CD14-positive monocyte (primary cell): ENCODE measurements at regions of chr5 and their contacts with region 1.

Region 1: GRCh38 chr5:39447059-39447458 is 22.3 kb upstream of the DAB2 start:
- DNase-seq: no peak
- H3K4me3 ChIP-seq: no peak overlapping the region
- H3K4me3 Mint-ChIP-seq: no peak overlapping the region
- H3K27ac ChIP-seq: no peak overlapping the region
- H3K27ac Mint-ChIP-seq: no peak overlapping the region
- H3K4me1 ChIP-seq: no peaks in the 10 kb centered on the region
- H3K4me1 Mint-ChIP-seq: peaks cover under 1% of the 10 kb centered on the region
- H3K27me3 ChIP-seq: no peaks in the 10 kb centered on the region
- H3K27me3 Mint-ChIP-seq: peaks cover 0 to 2% (median 0%) of the 10 kb centered on the region in 3 donors
- CTCF ChIP-seq: no peak

Region 2: DNA sequence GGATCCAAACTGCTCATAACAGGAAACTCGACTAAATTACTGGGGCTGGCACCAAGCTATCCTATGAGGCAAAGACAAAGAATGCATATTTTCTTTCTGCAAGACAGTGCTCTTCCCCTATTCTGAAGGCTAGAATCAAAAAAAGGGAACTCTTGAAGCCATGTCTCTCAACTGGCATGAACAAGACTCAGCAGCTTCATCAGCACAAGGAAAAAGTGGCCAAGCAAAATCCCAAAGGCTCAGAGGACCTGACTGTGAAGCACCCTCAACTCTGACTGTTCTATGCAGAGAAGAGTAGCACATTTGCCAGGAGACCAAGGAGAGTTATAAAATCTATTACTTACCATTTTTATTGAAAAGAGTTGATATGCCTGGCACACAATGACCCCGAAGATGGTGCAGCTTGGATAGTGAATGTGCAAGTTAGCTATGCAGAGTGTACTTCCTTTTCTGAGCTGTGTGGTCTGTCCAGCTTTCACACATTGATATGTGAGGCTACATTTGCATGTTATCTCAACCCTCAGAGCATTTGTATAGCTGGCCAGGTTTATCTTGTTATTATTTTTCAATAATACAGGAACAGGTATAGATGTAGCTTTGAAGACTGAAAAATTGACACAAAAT is 176.7 kb before region 1 on chr5:
- intact Hi-C with region 1: no loop called
- DNase-seq: peak; percentile 58 to 79 (median 76)
- H3K4me3 ChIP-seq: peak overlapping the region; percentile 28 to 78 (median 66)
- H3K4me3 Mint-ChIP-seq: peak overlapping the region; percentile 59 to 84
- H3K27ac ChIP-seq: peak overlapping the region; percentile 3 to 88
- H3K27ac Mint-ChIP-seq: peak overlapping the region; percentile 83 to 96 (median 94)
- H3K4me1 ChIP-seq: peaks cover 86 to 99% of the 10 kb centered on the region in 2 donors
- H3K4me1 Mint-ChIP-seq: peaks cover 81% of the 10 kb centered on the region
- H3K27me3 ChIP-seq: no peaks in the 10 kb centered on the region
- H3K27me3 Mint-ChIP-seq: no peaks in the 10 kb centered on the region
- CTCF ChIP-seq: no peak

Region 3: GRCh38 chr5:39399135-39400036 is 47.7 kb before region 1 on chr5:
- intact Hi-C with region 1: no loop called
- DNase-seq: peak; percentile 90 to 100 (median 97)
- H3K4me3 ChIP-seq: peak overlapping the region in 1 of 3 experiments; percentile 54
- H3K4me3 Mint-ChIP-seq: peak overlapping the region in 1 of 2 donors; percentile 43
- H3K27ac ChIP-seq: peak overlapping the region; percentile 64 to 98
- H3K27ac Mint-ChIP-seq: peak overlapping the region; percentile 89 to 97 (median 94)
- H3K4me1 ChIP-seq: peaks cover 32 to 38% of the 10 kb centered on the region in 2 donors
- H3K4me1 Mint-ChIP-seq: peaks cover 31% of the 10 kb centered on the region
- H3K27me3 ChIP-seq: no peaks in the 10 kb centered on the region
- H3K27me3 Mint-ChIP-seq: peaks cover 0 to 2% (median 0%) of the 10 kb centered on the region in 3 donors
- CTCF ChIP-seq: no peak

Region 4: DNA sequence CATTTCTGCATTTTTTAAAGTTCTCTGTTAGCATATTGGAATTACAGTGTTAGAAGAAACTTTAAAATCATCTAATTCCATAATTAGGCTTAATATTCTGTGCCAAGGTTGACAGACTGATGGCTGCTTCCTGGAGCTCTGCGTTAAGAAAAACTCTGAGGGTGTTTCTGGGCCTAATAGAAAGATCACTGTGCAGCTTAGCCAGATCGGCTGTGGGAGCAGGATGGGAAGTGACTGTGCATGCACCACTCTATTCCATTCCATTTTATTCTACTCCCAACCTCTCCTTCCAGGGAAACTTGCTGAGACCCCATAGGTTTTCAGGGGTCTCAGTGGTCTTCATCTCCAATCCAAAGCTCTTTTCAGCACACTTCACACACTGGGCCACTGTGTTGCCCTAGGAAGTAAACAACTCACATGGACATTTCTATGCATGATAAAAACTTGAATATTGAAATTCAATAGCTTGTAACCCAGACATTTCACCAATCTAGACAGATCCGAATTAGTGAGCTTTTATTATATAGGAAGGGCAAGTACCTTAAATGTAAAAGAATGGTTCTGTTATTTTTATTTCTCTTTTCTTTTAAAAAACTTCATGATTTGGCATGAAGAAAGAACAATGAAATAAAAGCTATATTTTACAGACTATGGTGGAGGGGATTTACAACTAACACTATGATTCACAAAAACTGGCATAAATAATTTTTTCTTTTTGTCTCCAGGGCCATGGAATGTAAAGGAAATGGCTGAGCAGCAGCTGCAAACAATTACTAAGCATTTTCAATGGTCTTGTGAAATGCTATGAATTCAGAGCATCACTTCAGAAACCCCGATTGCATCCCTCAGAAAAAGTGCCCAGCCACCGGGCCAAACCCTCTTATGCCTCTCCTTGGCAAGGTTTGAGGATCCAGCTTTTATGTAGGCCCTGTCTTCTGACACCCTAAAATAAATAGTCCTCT is 29.1 kb after region 1 on chr5:
- intact Hi-C with region 1: no loop called
- DNase-seq: peak; percentile 7 to 36 (median 32)
- H3K4me3 ChIP-seq: no peak overlapping the region
- H3K4me3 Mint-ChIP-seq: no peak overlapping the region
- H3K27ac ChIP-seq: no peak overlapping the region
- H3K27ac Mint-ChIP-seq: peak overlapping the region in 2 of 7 donors; percentile 28 to 43
- H3K4me1 ChIP-seq: peaks cover 11 to 13% of the 10 kb centered on the region in 2 donors
- H3K4me1 Mint-ChIP-seq: peaks cover 13% of the 10 kb centered on the region
- H3K27me3 ChIP-seq: no peaks in the 10 kb centered on the region
- H3K27me3 Mint-ChIP-seq: peaks cover 0 to 1% (median 0%) of the 10 kb centered on the region in 3 donors
- CTCF ChIP-seq: no peak

Region 5: GRCh38 chr5:39501397-39501796 is 54.3 kb after region 1 on chr5:
- intact Hi-C with region 1: loop called in 1 of 2 experiments (anchors 10 kb)
- DNase-seq: no peak
- H3K4me3 ChIP-seq: no peak overlapping the region
- H3K4me3 Mint-ChIP-seq: no peak overlapping the region
- H3K27ac ChIP-seq: no peak overlapping the region
- H3K27ac Mint-ChIP-seq: no peak overlapping the region
- H3K4me1 ChIP-seq: peaks cover 19 to 21% of the 10 kb centered on the region in 2 donors
- H3K4me1 Mint-ChIP-seq: peaks cover 29% of the 10 kb centered on the region
- H3K27me3 ChIP-seq: no peaks in the 10 kb centered on the region
- H3K27me3 Mint-ChIP-seq: peaks cover 0 to 5% (median 3%) of the 10 kb centered on the region in 3 donors
- CTCF ChIP-seq: no peak